ENCODE measurements at regions of chr12 and their contacts with region 1.

Region 1: DNA sequence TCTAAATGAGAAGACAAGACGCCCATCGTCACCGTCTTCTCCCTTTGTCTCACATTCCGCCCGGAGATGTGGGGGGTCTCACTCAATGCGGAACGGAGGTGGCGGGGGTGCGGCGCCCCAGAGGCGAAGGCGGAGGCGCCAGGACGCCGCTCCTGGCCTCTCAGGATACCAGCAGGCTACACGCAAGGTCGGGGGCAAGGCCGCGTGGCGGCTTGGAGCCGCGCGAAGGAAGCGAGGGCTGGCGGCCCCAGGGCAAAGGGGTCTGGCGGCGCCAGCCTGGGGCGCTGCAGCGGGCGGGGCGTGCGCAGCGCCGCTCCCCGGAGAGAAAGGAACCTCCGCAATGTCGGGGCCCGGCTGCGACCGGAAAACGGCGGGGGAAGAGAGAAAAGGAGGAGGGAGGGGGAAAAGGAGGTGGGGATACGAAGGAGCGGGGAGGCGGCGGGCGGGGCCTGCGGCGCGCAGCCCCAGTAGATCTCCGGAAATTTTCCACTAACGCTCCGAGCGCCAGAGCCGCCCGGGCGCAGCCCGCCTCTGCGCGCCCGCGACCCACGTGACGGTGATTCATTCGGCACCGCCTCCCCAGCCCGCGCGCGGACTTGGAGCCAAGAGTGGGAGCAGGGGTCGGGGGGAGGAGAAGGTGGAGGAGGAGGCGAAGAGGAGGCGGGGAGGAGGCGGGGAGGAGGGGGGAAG is 10.5 kb upstream of the SLC38A2 start:
- DNase-seq: peak; percentile 98
- H3K4me3 ChIP-seq: peak overlapping the region; percentile 27 to 86 (median 67)
- H3K27ac ChIP-seq: peak overlapping the region; percentile 96 to 100 (median 98)
- H3K4me1 ChIP-seq: peaks cover 38 to 59% (median 51%) of the 10 kb centered on the region in 6 donors
- H3K27me3 ChIP-seq: no peaks in the 10 kb centered on the region
- CTCF ChIP-seq: peak in 6 of 11 experiments; percentile 11 to 50 (median 30)
- POLR2A ChIP-seq: peak in 2 of 3 donors; percentile 6 to 34

Region 2: DNA sequence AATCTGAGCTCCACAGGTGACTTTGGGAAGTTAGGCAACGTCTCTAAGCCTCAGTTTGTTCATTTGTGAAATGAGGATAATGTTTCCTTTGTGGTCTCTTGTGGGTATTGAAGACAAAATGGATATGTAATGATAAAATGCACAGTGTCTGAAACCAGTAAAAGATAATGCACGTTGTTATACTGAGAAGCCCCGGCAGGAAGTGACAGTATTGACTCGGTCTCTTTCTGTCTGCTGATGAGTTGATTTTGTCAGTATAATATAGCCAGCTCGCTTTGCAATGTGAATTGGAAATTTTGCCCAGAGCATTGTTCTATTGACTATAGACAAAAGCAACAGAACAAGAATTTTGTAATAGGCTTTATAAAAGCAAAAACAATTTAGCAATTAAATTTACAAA is 65.1 kb before region 1 on chr12:
- intact Hi-C with region 1: no loop called
- DNase-seq: no peak
- H3K4me3 ChIP-seq: no peak overlapping the region
- H3K27ac ChIP-seq: no peak overlapping the region
- H3K4me1 ChIP-seq: no peaks in the 10 kb centered on the region
- H3K27me3 ChIP-seq: no peaks in the 10 kb centered on the region
- CTCF ChIP-seq: no peak
- POLR2A ChIP-seq: no peak

Region 3: DNA sequence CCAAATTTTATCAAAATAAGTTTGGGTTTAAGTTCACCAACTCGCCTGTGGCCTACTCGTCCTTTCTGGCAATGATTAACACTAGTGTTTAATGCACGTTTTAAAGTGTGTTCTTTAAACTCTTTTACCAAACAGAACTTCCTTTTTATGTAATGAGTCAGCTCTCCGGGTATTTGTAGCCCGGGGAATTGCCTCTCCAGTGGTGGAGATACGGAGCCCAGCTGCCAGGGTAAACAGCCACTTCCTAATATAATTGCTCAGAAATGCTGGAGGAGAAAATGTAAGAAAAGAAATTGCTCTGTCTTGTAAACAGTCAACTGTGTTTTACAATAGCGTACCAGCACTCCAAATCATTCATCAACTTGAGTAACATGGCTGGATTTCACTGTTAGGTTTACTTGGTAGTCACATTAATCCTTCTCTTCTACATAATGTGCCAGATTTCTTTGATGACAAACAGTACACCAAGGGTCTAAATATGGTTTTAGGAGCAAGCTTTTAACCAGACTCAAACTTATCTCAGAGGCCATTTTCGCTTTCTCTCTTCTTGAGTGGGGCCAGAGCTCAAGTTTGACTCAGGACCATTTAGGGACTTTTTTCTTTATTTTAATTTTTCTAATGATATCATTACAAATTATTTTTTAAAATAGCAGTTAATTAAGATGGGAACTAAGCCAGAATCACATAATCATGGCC is 90.7 kb after region 1 on chr12:
- intact Hi-C with region 1: loop called (anchors 10 kb)
- DNase-seq: peak; percentile 74
- H3K4me3 ChIP-seq: peak overlapping the region in 2 of 8 donors; percentile 3 to 8
- H3K27ac ChIP-seq: peak overlapping the region; percentile 68 to 90 (median 80)
- H3K4me1 ChIP-seq: peaks cover 18 to 57% (median 32%) of the 10 kb centered on the region in 6 donors
- H3K27me3 ChIP-seq: no peaks in the 10 kb centered on the region
- CTCF ChIP-seq: peak in 2 of 11 experiments; percentile 8 to 12
- POLR2A ChIP-seq: no peak

Region 4: GRCh38 chr12:46494424-46494823 is 111.3 kb after region 1 on chr12:
- intact Hi-C with region 1: no loop called
- DNase-seq: no peak
- H3K4me3 ChIP-seq: no peak overlapping the region
- H3K27ac ChIP-seq: peak overlapping the region in 5 of 8 donors; percentile 3 to 40 (median 28)
- H3K4me1 ChIP-seq: peaks cover 0 to 13% (median 0%) of the 10 kb centered on the region in 6 donors
- H3K27me3 ChIP-seq: no peaks in the 10 kb centered on the region
- CTCF ChIP-seq: no peak
- POLR2A ChIP-seq: no peak

Measured in spleen (tissue), 13 donors.